IMR-90 (cell line): ENCODE measurements at regions of chr11 and their contacts with region 1.

Region 1: DNA sequence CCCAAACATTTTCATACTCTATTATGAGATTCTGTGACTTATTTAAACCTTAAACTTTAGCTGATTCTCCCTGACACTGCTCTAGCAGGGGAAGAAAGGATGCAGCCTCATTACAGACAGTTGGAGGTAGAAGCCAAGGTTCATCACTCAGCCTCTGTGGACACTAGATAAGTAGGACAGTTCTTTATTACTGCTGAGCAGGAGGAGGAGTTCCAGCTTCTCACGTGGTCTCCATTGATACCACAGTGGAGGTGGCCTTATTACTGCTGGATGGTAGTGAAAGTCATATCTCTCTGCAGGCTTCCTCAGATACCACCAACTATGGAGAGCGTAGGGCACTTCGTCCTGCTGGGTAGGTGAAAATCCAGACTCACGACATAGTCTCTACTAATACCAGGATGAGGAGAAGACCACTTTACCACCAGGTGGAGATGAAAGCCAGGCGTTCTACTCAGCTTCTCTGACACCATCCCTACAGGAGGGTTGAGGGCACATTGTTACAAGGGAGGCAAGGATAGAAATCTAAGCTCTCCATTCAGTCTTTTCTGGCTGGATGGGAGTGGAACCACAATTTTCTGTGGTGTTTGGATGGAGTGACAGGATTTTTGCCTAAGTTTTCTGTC is 13.1 kb upstream of the ANGPTL5 start:
- DNase-seq: no peak
- ATAC-seq: no peak
- H3K4me3 ChIP-seq: no peak overlapping the region
- H3K27ac ChIP-seq: no peak overlapping the region
- H3K4me1 ChIP-seq: no peaks in the 10 kb centered on the region
- H3K27me3 ChIP-seq: no peaks in the 10 kb centered on the region
- CTCF ChIP-seq: no peak
- POLR2A ChIP-seq: no peak
- RAD21 ChIP-seq: no peak

Region 2: GRCh38 chr11:100991541-100991940 is 937.9 kb before region 1 on chr11:
- CTCF ChIA-PET with region 1: no interaction called
- POLR2A ChIA-PET with region 1: interaction called, 13 read pairs
- dilution Hi-C with region 1: no loop called
- in situ Hi-C with region 1: no loop called
- intact Hi-C with region 1: no loop called
- DNase-seq: peak; percentile 44
- ATAC-seq: peak; percentile 40; the same call in 1 of the 2 replicates
- H3K4me3 ChIP-seq: no peak overlapping the region
- H3K27ac ChIP-seq: no peak overlapping the region
- H3K4me1 ChIP-seq: no peaks in the 10 kb centered on the region
- H3K27me3 ChIP-seq: no peaks in the 10 kb centered on the region
- CTCF ChIP-seq: no peak
- POLR2A ChIP-seq: no peak
- RAD21 ChIP-seq: no peak